Right lobe of liver (tissue), 6 donors: ENCODE measurements at regions of chr6 and their contacts with region 1.

Region 1: DNA sequence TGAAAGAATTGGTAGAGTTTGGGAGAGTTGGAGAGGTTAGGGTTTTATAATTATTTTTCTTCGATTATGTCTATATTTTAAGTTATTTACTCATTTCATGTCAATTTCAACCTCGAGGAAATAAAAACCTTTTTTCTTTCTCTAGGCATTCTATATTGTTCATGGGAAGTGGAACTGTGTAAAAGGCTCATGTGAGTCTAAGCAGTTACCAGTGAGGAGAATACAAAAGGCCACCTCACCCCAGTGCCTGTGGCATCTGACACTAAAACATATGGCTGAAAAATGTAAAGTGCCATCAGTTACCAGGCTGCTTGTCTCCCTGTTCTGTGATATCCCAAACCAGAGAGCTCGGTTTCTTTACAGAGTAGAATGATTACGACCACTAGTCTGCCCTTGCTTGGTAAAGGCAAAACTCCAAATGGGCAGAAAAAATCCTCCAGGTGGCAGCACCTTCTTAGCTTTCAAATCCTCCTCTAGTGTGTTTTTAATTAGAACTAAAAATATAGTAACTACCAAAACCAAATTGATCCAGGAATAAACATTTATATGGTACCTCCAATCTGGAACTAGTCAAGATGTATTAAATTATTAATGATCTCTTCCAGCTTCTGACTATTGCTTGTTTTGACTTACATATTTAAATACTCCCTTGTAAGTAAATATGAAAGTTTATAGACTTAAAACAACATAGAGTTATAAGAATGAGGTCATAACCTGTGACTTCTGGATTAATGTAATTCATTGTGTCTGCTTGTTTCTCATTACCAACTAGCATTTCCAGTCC is 122.6 kb upstream of the MCHR2 start:
- DNase-seq: no peak
- ATAC-seq: peak; percentile 67 to 86 (median 76)
- H3K4me3 ChIP-seq: no peak overlapping the region
- H3K27ac ChIP-seq: no peak overlapping the region
- H3K4me1 ChIP-seq: peaks cover 0 to 1% (median 0%) of the 10 kb centered on the region in 4 donors
- H3K27me3 ChIP-seq: no peaks in the 10 kb centered on the region
- CTCF ChIP-seq: peak; percentile 60 to 74 (median 67)
- POLR2A ChIP-seq: no peak

Region 2: DNA sequence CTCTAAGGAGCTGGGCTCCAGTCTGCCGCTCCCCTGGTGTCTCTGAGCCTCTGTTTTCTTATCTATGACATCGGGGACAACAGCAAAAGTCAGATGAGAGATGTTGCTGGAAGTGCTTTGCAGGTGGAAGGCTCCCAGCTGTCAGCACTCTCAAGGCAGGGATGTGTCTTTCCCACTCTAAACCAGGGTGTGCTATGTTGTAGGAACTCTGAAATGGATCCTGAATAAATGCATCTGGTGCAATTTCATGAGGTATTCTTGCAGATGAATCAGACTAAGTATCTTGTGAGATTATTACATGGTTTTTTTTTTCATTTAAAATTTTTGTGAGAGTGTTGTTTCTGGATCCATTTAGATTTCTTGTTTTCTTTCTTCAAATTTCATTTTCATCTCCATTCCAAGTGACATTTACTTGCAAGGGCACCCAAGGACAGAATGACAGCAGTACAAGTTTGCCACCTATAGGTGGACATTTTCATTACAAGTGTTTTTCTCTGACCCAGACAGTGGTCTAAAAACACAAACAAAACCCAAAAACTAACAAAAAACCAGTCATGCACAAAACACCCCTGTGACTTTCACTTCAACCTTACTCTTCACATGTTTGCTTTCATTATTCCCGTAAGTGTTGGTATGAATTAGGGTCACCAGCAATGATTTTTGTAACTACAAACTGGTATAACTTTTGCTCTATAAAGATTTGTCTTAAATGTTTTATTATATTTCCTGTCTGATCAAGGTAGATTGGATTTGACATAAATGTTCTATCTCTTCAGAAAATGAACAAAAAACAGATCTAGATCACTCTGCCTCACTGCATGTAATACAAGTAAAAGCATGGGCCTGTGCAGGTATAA is 362.8 kb after region 1 on chr6:
- intact Hi-C with region 1: loop called (anchors 10 kb)
- DNase-seq: no peak
- ATAC-seq: peak; percentile 27 to 41 (median 37)
- H3K4me3 ChIP-seq: no peak overlapping the region
- H3K27ac ChIP-seq: no peak overlapping the region
- H3K4me1 ChIP-seq: peaks cover 0 to 23% (median 7%) of the 10 kb centered on the region in 4 donors
- H3K27me3 ChIP-seq: no peaks in the 10 kb centered on the region
- CTCF ChIP-seq: peak; percentile 64 to 79 (median 72)
- POLR2A ChIP-seq: no peak

Region 3: DNA sequence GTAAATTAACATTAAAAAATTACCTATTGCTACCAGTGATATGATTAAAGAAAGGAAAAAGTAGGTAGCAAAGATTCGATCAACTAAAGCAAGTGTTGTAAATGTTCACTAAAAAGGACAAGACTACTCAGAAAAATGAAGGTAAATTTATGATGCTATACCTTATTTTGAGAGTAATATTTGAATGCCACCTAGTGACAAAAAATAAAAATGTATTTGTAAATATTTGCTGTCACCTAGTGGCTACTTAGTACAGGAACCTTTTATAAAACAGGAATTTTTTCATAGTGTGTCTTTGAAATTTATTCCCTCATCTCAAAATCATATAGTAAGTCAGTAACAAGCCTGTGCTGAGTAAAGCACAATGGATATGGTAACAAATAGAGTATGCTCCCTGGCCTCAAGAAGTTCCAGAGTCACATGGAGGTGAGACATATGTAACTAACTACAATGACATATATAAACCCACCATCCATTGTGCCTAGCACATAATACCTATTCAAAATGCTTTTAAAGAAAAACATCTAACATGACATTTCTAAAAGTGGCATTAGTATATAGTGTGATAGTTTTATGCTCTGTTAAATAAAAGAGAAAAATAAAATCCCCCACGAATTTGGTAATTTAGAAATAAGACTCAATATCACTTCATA is 541.2 kb after region 1 on chr6:
- intact Hi-C with region 1: loop called in 1 of 2 experiments (anchors 10 kb)
- DNase-seq: no peak
- ATAC-seq: peak in 3 of 4 donors; percentile 40 to 54 (median 50)
- H3K4me3 ChIP-seq: no peak overlapping the region
- H3K27ac ChIP-seq: no peak overlapping the region
- H3K4me1 ChIP-seq: no peaks in the 10 kb centered on the region
- H3K27me3 ChIP-seq: no peaks in the 10 kb centered on the region
- CTCF ChIP-seq: peak; percentile 55 to 64 (median 59)
- POLR2A ChIP-seq: no peak